Endothelial cell of umbilical vein (primary cell): ENCODE measurements at regions of chr2 and their contacts with region 1.

Region 1: GRCh38 chr2:216379977-216380376 is 7.7 kb upstream of the MARCHF4 start:
- DNase-seq: no peak
- H3K4me3 ChIP-seq: no peak overlapping the region
- H3K27ac ChIP-seq: no peak overlapping the region
- H3K4me1 ChIP-seq: no peaks in the 10 kb centered on the region
- H3K27me3 ChIP-seq: no peaks in the 10 kb centered on the region
- CTCF ChIP-seq: no peak
- POLR2A ChIP-seq: no peak

Region 2: GRCh38 chr2:216391401-216391800 is 11.4 kb after region 1 on chr2:
- CTCF ChIA-PET with region 1: no interaction called
- POLR2A ChIA-PET with region 1: no interaction called
- dilution Hi-C with region 1: no loop called
- intact Hi-C with region 1: no loop called
- DNase-seq: peak; percentile 42
- H3K4me3 ChIP-seq: no peak overlapping the region
- H3K27ac ChIP-seq: no peak overlapping the region
- H3K4me1 ChIP-seq: peaks cover 6% of the 10 kb centered on the region
- H3K27me3 ChIP-seq: peaks cover 0 to 3% of the 10 kb centered on the region in 2 experiments
- CTCF ChIP-seq: no peak
- POLR2A ChIP-seq: no peak

Region 3: DNA sequence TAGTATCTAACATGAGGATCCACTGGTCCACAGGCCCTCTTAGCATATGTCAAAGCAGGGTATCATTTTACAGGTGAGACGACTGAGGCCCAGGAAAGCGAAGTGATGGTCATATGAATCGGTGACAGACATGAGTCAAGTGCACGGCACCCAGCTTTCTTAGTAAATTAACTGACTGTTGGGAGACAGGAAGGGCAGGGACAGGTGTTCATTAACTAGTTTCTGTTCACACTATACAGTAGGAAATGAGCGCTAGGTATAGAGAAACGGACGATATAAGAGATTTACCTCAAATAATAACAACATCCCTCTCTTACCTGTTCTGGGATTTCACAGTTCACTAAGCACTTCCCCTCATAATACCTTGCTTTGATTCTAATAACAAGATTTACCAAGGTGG is 30.6 kb after region 1 on chr2:
- CTCF ChIA-PET with region 1: no interaction called
- POLR2A ChIA-PET with region 1: no interaction called
- dilution Hi-C with region 1: no loop called
- intact Hi-C with region 1: no loop called
- DNase-seq: no peak
- H3K4me3 ChIP-seq: no peak overlapping the region
- H3K27ac ChIP-seq: no peak overlapping the region
- H3K4me1 ChIP-seq: peaks cover 4% of the 10 kb centered on the region
- H3K27me3 ChIP-seq: no peaks in the 10 kb centered on the region
- CTCF ChIP-seq: no peak
- POLR2A ChIP-seq: no peak

Region 4: GRCh38 chr2:216423071-216423470 is 43.1 kb after region 1 on chr2:
- CTCF ChIA-PET with region 1: no interaction called
- POLR2A ChIA-PET with region 1: no interaction called
- dilution Hi-C with region 1: no loop called
- intact Hi-C with region 1: loop called (anchors 1 kb)
- DNase-seq: no peak
- H3K4me3 ChIP-seq: no peak overlapping the region
- H3K27ac ChIP-seq: no peak overlapping the region
- H3K4me1 ChIP-seq: peaks cover 8% of the 10 kb centered on the region
- H3K27me3 ChIP-seq: no peaks in the 10 kb centered on the region
- CTCF ChIP-seq: no peak
- POLR2A ChIP-seq: no peak

Region 5: DNA sequence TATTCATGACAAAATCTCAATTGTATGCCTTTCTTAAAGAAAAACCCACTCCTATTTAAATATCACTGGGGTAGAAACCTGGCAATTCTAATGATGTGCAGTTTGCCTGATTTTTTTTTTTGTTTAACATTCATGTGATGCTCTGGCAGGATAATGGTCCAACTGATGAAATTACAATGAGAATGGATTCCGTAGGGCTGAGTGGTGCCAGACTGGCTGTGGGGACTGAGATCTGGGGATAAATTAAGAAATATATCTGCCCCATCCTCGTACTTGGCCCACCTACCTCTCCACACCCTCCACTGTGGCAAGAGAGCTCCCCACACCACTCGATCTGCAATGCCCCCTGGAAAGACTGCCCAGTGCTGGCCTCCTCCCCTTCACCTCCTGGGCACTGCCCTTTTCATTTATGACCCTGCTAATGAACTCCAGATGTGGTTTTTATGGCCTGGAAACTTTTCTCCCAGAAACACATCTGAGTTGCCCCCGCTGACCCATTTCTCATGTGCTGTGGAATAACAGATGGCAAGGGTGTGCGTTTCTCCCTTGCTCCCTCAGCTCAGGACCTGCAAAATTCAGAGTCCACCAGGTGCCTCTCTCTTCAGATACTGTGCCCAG is 85.7 kb after region 1 on chr2:
- CTCF ChIA-PET with region 1: no interaction called
- POLR2A ChIA-PET with region 1: no interaction called
- dilution Hi-C with region 1: no loop called
- intact Hi-C with region 1: no loop called
- DNase-seq: no peak
- H3K4me3 ChIP-seq: no peak overlapping the region
- H3K27ac ChIP-seq: no peak overlapping the region
- H3K4me1 ChIP-seq: no peaks in the 10 kb centered on the region
- H3K27me3 ChIP-seq: no peaks in the 10 kb centered on the region
- CTCF ChIP-seq: no peak
- POLR2A ChIP-seq: no peak

Region 6: DNA sequence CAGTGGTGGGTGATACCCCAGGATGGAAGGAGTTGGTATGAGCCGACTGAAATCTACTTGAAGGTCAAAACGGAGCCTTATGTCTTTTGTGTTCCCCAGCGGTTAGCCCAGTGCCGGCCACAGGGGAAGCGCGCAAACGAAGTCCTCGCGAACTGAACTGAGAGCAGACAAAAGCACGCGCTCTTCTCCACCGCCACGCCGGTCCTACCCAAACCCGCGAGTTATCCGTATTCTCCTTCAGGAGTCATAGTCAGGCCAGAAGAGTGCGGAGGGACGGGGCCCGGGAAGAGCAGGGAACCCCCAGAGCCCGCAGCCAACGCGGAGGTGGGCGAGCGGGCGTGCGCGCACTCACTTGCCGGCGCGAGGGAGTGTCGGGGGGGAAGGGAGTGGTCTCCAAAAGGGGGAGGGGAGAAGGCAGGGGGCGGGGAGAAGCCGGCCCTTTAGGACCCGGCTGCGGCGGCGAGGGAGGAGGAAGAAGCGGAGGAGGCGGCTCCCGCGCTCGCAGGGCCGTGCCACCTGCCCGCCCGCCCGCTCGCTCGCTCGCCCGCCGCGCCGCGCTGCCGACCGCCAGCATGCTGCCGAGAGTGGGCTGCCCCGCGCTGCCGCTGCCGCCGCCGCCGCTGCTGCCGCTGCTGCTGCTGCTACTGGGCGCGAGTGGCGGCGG is 253.1 kb after region 1 on chr2 and contains the start of gene IGFBP2:
- CTCF ChIA-PET with region 1: no interaction called
- POLR2A ChIA-PET with region 1: no interaction called
- dilution Hi-C with region 1: no loop called
- intact Hi-C with region 1: no loop called
- DNase-seq: peak; percentile 56
- H3K4me3 ChIP-seq: peak within 1 kb of the TSS; percentile 52 to 79 (median 59)
- H3K27ac ChIP-seq: no peak within 1 kb of the TSS
- H3K4me1 ChIP-seq: peaks cover 30% of the 10 kb centered on the region
- H3K27me3 ChIP-seq: peaks cover 6 to 9% of the 10 kb centered on the region in 2 experiments
- CTCF ChIP-seq: no peak
- POLR2A ChIP-seq: no peak
- total RNA-seq, gene IGFBP2: 212 and 229 TPM in 2 replicates